ENCODE measurements at regions of chr7 and their contacts with region 1.

Region 1: GRCh38 chr7:155796381-155797261 is 15.6 kb downstream of the SHH start:
- DNase-seq: peak in 4 of 5 donors; percentile 47 to 54 (median 52)
- H3K4me3 ChIP-seq: no peak overlapping the region
- H3K4me3 Mint-ChIP-seq: no peak overlapping the region
- H3K27ac ChIP-seq: no peak overlapping the region
- H3K27ac Mint-ChIP-seq: no peak overlapping the region
- H3K4me1 ChIP-seq: peaks cover 3% of the 10 kb centered on the region
- H3K4me1 Mint-ChIP-seq: no peaks in the 10 kb centered on the region
- H3K27me3 ChIP-seq: peaks cover 6% of the 10 kb centered on the region
- H3K27me3 Mint-ChIP-seq: peaks cover 21 to 26% of the 10 kb centered on the region in 2 donors

Region 2: GRCh38 chr7:156473476-156474240 is 677.0 kb after region 1 on chr7:
- CTCF ChIA-PET with region 1: no interaction called
- POLR2A ChIA-PET with region 1: no interaction called
- intact Hi-C with region 1: loop called (anchors 2 kb)
- DNase-seq: peak in 1 of 5 donors; percentile 4
- H3K4me3 ChIP-seq: no peak overlapping the region
- H3K4me3 Mint-ChIP-seq: no peak overlapping the region
- H3K27ac ChIP-seq: no peak overlapping the region
- H3K27ac Mint-ChIP-seq: no peak overlapping the region
- H3K4me1 ChIP-seq: no peaks in the 10 kb centered on the region
- H3K4me1 Mint-ChIP-seq: no peaks in the 10 kb centered on the region
- H3K27me3 ChIP-seq: no peaks in the 10 kb centered on the region
- H3K27me3 Mint-ChIP-seq: peaks cover 17 to 19% of the 10 kb centered on the region in 2 donors

Region 3: DNA sequence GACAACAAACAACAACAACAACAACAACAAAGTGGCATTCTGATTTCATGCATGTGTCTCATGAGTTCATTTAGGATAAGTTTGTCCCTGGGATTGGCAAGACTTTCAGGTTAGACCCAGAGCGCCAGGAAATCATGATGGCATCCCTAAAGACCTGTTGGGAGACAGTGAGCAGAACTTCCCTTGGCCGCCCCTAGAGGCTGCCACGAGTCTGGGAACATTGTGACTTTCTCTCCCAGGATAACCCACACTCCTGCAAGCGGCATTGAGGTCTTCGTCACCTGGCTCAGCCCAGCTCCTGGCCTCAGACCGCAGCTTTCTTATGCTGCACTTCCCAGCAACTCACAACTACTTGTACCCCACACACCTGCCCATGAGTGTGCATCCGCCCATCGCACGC is 763.5 kb after region 1 on chr7:
- CTCF ChIA-PET with region 1: no interaction called
- POLR2A ChIA-PET with region 1: no interaction called
- intact Hi-C with region 1: no loop called
- DNase-seq: no peak
- H3K4me3 ChIP-seq: no peak overlapping the region
- H3K4me3 Mint-ChIP-seq: no peak overlapping the region
- H3K27ac ChIP-seq: no peak overlapping the region
- H3K27ac Mint-ChIP-seq: peak overlapping the region in 1 of 7 donors; percentile 4
- H3K4me1 ChIP-seq: no peaks in the 10 kb centered on the region
- H3K4me1 Mint-ChIP-seq: no peaks in the 10 kb centered on the region
- H3K27me3 ChIP-seq: no peaks in the 10 kb centered on the region
- H3K27me3 Mint-ChIP-seq: peaks cover 0 to 8% of the 10 kb centered on the region in 2 donors

Region 4: DNA sequence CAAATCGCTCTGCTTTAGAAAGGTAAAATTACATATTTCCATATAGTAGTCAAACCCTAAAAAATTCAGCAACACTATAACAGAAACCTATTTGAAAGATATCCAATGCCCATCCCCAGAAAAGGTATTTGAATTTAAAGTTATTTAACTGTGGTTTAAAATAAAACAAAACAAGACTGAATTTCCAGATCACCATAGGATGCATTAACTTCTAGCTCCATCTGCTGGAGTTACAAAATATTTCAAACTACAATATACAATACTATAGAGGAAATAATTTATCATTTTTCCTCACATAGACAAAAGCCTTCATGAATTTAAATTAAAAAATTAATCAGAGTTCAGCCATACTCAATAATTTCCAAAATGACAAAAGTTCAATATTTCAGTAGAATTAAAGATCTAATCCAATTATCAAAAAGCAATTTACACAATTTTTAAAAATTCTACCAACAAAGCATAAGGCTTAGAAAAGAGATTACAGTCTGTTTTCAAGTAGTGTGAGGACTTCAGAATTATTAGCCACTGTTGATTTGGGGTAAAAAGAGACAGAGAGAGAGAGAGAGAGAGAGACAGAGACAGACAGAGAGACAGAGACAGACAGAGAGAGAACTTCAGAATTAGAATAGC is 1020.4 kb after region 1 on chr7:
- CTCF ChIA-PET with region 1: interaction called, 3 read pairs
- POLR2A ChIA-PET with region 1: no interaction called
- intact Hi-C with region 1: loop called (anchors 1 kb)
- DNase-seq: peak in 2 of 5 donors; percentile 4 to 14
- H3K4me3 ChIP-seq: no peak overlapping the region
- H3K4me3 Mint-ChIP-seq: peak overlapping the region in 1 of 8 donors; percentile 31
- H3K27ac ChIP-seq: no peak overlapping the region
- H3K27ac Mint-ChIP-seq: peak overlapping the region in 1 of 7 donors; percentile 49
- H3K4me1 ChIP-seq: no peaks in the 10 kb centered on the region
- H3K4me1 Mint-ChIP-seq: peaks cover 0 to 3% (median 0%) of the 10 kb centered on the region in 4 donors
- H3K27me3 ChIP-seq: no peaks in the 10 kb centered on the region
- H3K27me3 Mint-ChIP-seq: no peaks in the 10 kb centered on the region

Region 5: GRCh38 chr7:157273208-157274093 is 1476.8 kb after region 1 on chr7:
- CTCF ChIA-PET with region 1: no interaction called
- POLR2A ChIA-PET with region 1: no interaction called
- intact Hi-C with region 1: loop called (anchors 2 kb)
- DNase-seq: peak; percentile 43 to 63 (median 51)
- H3K4me3 ChIP-seq: no peak overlapping the region
- H3K4me3 Mint-ChIP-seq: peak overlapping the region in 2 of 8 donors; percentile 2 to 23
- H3K27ac ChIP-seq: no peak overlapping the region
- H3K27ac Mint-ChIP-seq: peak overlapping the region in 6 of 7 donors; percentile 37 to 85 (median 44)
- H3K4me1 ChIP-seq: peaks cover 37% of the 10 kb centered on the region
- H3K4me1 Mint-ChIP-seq: peaks cover 21 to 43% (median 31%) of the 10 kb centered on the region in 4 donors
- H3K27me3 ChIP-seq: no peaks in the 10 kb centered on the region
- H3K27me3 Mint-ChIP-seq: peaks cover 1 to 7% of the 10 kb centered on the region in 2 donors

Measured in CD4-positive, alpha-beta memory T cell (primary cell).